ENCODE measurements at regions of chr1 and their contacts with region 1.

Region 1: GRCh38 chr1:229479660-229480399 is 28.3 kb downstream of the NUP133 start:
- H3K4me3 Mint-ChIP-seq: no peak overlapping the region
- H3K27ac Mint-ChIP-seq: peak overlapping the region; percentile 2
- H3K4me1 Mint-ChIP-seq: peaks cover 11% of the 10 kb centered on the region
- H3K27me3 Mint-ChIP-seq: no peaks in the 10 kb centered on the region

Region 2: GRCh38 chr1:228664399-228664914 is 815.4 kb before region 1 on chr1:
- intact Hi-C with region 1: loop called (anchors 10 kb)
- H3K4me3 Mint-ChIP-seq: no peak overlapping the region
- H3K27ac Mint-ChIP-seq: no peak overlapping the region
- H3K4me1 Mint-ChIP-seq: peaks cover 7% of the 10 kb centered on the region
- H3K27me3 Mint-ChIP-seq: peaks cover 20% of the 10 kb centered on the region

Region 3: DNA sequence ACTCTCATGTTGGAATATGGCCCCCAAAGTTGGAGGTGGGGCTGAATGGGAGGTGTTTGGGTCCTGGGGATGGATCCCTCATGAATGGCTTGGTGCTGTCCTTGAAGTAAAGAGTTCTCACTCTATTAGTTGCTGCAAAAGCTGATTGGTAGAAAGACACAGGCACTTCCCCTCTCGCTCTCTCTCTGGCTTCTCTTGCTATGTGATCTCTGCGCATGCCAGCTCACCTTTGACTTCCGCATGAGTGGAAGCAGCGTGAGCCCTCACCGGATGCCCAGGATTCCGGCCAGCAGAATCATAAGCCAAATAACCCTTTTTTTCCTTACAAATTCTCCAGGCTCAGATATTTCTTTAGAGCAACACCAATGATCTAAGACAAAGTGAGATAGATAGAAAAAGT is 116.1 kb before region 1 on chr1:
- intact Hi-C with region 1: no loop called
- H3K4me3 Mint-ChIP-seq: no peak overlapping the region
- H3K27ac Mint-ChIP-seq: no peak overlapping the region
- H3K4me1 Mint-ChIP-seq: no peaks in the 10 kb centered on the region
- H3K27me3 Mint-ChIP-seq: peaks cover 41% of the 10 kb centered on the region